Heart right ventricle (tissue), 16 donors: ENCODE measurements at regions of chr6 and their contacts with region 1.

Region 1: GRCh38 chr6:170295510-170296422 is 4.9 kb upstream of the DLL1 start:
- DNase-seq: peak in 1 of 2 donors; percentile 42
- ATAC-seq: peak in 1 of 8 donors; percentile 42
- H3K4me3 ChIP-seq: peak overlapping the region; percentile 40 to 62 (median 55)
- H3K27ac ChIP-seq: peak overlapping the region in 1 of 10 donors; percentile 15
- H3K4me1 ChIP-seq: peaks cover 24 to 52% (median 39%) of the 10 kb centered on the region in 9 donors
- H3K27me3 ChIP-seq: peaks cover 11 to 96% (median 34%) of the 10 kb centered on the region in 7 donors
- CTCF ChIP-seq: no peak

Region 2: GRCh38 chr6:169831450-169832246 is 464.1 kb before region 1 on chr6:
- intact Hi-C with region 1: loop called in 8 of 10 experiments (anchors 2 to 10 kb)
- DNase-seq: peak; percentile 69 to 84
- ATAC-seq: peak; percentile 86 to 96 (median 93)
- H3K4me3 ChIP-seq: no peak overlapping the region
- H3K27ac ChIP-seq: no peak overlapping the region
- H3K4me1 ChIP-seq: peaks cover 0 to 18% (median 12%) of the 10 kb centered on the region in 9 donors
- H3K27me3 ChIP-seq: peaks cover 0 to 35% (median 10%) of the 10 kb centered on the region in 7 donors
- CTCF ChIP-seq: peak; percentile 87 to 98 (median 94)

Region 3: GRCh38 chr6:169978615-169979513 is 316.9 kb before region 1 on chr6:
- intact Hi-C with region 1: loop called in 1 of 10 experiments (anchors 10 kb)
- DNase-seq: no peak
- ATAC-seq: no peak
- H3K4me3 ChIP-seq: no peak overlapping the region
- H3K27ac ChIP-seq: no peak overlapping the region
- H3K4me1 ChIP-seq: peaks cover 0 to 8% (median 0%) of the 10 kb centered on the region in 9 donors
- H3K27me3 ChIP-seq: peaks cover 0 to 16% (median 5%) of the 10 kb centered on the region in 7 donors
- CTCF ChIP-seq: no peak

Region 4: DNA sequence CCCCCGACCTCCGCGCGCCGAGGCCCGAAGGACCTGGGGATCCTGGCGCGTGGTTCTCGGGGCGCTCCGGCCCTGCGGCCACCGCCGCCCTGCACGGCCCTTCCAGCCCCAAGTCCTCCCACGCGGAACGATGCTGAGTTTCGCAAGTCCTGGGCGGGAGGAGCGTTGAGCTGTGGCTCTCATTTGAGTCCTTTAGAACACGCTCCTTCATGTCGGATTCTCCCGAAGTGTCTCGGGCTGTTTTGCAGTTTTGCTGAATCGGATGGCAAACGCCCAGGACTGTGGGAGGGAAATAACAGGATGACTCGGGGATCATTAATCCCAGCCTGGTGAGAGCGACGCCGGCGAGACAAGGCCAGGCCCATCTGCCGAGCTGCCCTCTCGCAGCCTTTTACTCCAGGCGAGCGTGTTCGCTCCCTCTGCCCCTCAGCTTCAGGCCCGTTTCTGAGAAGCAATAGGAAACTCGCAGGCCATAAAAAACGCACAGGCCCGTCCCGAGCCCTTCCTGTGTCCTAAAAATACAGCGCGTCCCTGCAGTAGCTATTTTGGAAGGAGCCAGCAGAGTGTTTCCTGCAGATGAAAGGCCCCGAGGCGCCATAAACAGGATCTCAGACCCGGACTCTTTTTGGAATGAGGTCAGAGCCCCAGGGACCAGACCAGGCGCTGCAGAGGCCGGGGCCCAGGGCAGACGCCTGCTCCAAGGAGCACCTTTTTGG is 158.4 kb before region 1 on chr6:
- intact Hi-C with region 1: loop called in 1 of 10 experiments (anchors 5 kb)
- DNase-seq: peak; percentile 45 to 81
- ATAC-seq: peak; percentile 74 to 92 (median 84)
- H3K4me3 ChIP-seq: peak overlapping the region in 4 of 10 donors; percentile 26 to 41 (median 38)
- H3K27ac ChIP-seq: peak overlapping the region; percentile 74 to 96 (median 86)
- H3K4me1 ChIP-seq: peaks cover 3 to 53% (median 38%) of the 10 kb centered on the region in 9 donors
- H3K27me3 ChIP-seq: no peaks in the 10 kb centered on the region
- CTCF ChIP-seq: peak in 1 of 9 donors; percentile 5

Region 5: DNA sequence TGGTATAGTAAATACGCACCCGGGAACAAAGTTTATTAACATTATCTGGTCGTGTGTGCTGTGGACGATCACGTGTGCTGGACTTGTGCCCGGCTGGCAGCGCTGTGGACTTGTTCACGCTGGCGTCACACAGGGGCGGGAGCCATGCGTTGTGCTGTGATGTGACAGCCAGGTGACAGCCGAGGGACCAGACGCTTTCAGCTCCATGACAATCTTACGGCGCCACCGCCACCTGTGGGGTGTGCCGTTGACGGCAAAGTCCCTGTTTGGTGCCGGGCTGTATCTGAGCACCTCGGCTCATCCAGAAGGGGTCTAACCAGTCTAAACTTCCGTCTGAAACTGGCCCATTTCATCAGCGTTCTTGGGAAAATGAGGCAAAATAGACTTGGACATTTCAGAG is 30.1 kb before region 1 on chr6:
- intact Hi-C with region 1: loop called in 1 of 10 experiments (anchors 2 kb)
- DNase-seq: peak; percentile 34 to 74
- ATAC-seq: peak; percentile 58 to 86 (median 74)
- H3K4me3 ChIP-seq: peak overlapping the region in 5 of 10 donors; percentile 2 to 20 (median 10)
- H3K27ac ChIP-seq: peak overlapping the region in 9 of 10 donors; percentile 12 to 81 (median 73)
- H3K4me1 ChIP-seq: peaks cover 4 to 18% (median 13%) of the 10 kb centered on the region in 9 donors
- H3K27me3 ChIP-seq: peaks cover 0 to 14% (median 0%) of the 10 kb centered on the region in 7 donors
- CTCF ChIP-seq: no peak

Region 6: GRCh38 chr6:170367241-170367640 is 71.5 kb after region 1 on chr6:
- intact Hi-C with region 1: no loop called
- DNase-seq: no peak
- ATAC-seq: no peak
- H3K4me3 ChIP-seq: no peak overlapping the region
- H3K27ac ChIP-seq: no peak overlapping the region
- H3K4me1 ChIP-seq: peaks cover 0 to 19% (median 3%) of the 10 kb centered on the region in 9 donors
- H3K27me3 ChIP-seq: no peaks in the 10 kb centered on the region
- CTCF ChIP-seq: no peak

Region 7: GRCh38 chr6:170388113-170388512 is 92.3 kb after region 1 on chr6:
- intact Hi-C with region 1: no loop called
- DNase-seq: no peak
- ATAC-seq: no peak
- H3K4me3 ChIP-seq: no peak overlapping the region
- H3K27ac ChIP-seq: no peak overlapping the region
- H3K4me1 ChIP-seq: peaks cover 0 to 20% (median 8%) of the 10 kb centered on the region in 9 donors
- H3K27me3 ChIP-seq: no peaks in the 10 kb centered on the region
- CTCF ChIP-seq: no peak

Region 8: DNA sequence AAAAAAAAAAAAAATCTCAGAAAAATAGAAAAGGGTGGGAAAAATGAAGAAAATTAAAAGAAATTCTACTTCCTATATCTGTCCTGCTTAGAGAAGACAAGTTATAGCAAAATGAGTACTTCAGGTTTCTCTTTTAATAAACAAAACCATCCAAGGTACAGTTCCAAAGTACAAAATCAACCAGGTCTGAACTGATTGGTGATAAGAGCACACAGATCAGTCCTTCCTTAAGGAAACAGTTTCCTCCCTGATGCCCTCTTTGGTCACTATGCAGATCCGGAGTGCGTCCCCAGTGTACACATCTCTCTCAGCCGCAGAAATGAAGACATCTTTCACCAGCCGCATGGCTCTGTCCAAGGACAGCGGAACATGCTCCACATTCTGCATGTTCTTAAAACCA is 239.2 kb after region 1 on chr6:
- intact Hi-C with region 1: no loop called
- DNase-seq: no peak
- ATAC-seq: no peak
- H3K4me3 ChIP-seq: no peak overlapping the region
- H3K27ac ChIP-seq: no peak overlapping the region
- H3K4me1 ChIP-seq: peaks cover 0 to 12% (median 0%) of the 10 kb centered on the region in 9 donors
- H3K27me3 ChIP-seq: no peaks in the 10 kb centered on the region
- CTCF ChIP-seq: no peak